ENCODE measurements at regions of chr7 and their contacts with region 1.

Region 1: GRCh38 chr7:99438573-99439480 is at the starts of genes CPSF4 and PTCD1:
- DNase-seq: peak; percentile 84 to 96
- H3K4me3 ChIP-seq: peak within 1 kb of the TSS; percentile 87 to 95 (median 88)
- H3K27ac ChIP-seq: peak within 1 kb of the TSS; percentile 93
- H3K4me1 ChIP-seq: peaks cover 0 to 12% (median 6%) of the 10 kb centered on the region in 4 experiments; a peak in 5 of 7 replicates
- H3K27me3 ChIP-seq: no peaks in the 10 kb centered on the region
- CTCF ChIP-seq: no peak
- EP300 ChIP-seq: peak in 1 of 2 experiments; percentile 49; a peak in 1 of 3 replicates
- POLR2A ChIP-seq: peak in 1 of 2 experiments; percentile 83; a peak in 2 of 3 replicates
- RAD21 ChIP-seq: no peak
- total RNA-seq, gene CPSF4: 74.8 and 77.5 TPM in 2 replicates
- total RNA-seq, gene PTCD1: 7.5 and 8.5 TPM in 2 replicates

Region 2: GRCh38 chr7:99422186-99422585 is 16.6 kb before region 1 on chr7:
- CTCF ChIA-PET with region 1: no interaction called
- POLR2A ChIA-PET with region 1: interaction called, 19 read pairs
- DNase-seq: no peak
- H3K4me3 ChIP-seq: no peak overlapping the region
- H3K27ac ChIP-seq: no peak overlapping the region
- H3K4me1 ChIP-seq: no peaks in the 10 kb centered on the region; a peak in 1 of 7 replicates
- H3K27me3 ChIP-seq: no peaks in the 10 kb centered on the region; a peak in 1 of 7 replicates
- CTCF ChIP-seq: no peak
- EP300 ChIP-seq: no peak
- POLR2A ChIP-seq: no peak
- RAD21 ChIP-seq: no peak

Region 3: DNA sequence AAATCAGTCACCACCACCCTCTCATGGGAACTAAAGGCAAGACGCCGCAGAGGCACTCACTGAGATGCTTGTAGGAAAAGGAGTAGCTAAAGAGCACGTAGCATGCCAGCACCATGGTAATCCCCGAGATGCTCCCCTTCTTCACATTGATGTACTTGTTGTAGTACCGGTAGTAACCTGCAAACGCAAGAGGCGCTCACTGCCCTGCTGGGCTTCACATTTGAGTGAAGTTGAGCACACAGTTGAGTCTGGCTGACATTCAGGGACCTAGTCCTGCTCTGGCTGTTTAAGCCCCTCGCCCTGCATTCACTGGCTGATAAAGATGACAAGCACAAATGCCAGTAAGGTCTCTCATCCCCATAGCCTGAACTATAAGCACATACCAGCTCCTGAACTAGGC is 20.3 kb after region 1 on chr7:
- CTCF ChIA-PET with region 1: interaction called, 7 read pairs
- POLR2A ChIA-PET with region 1: interaction called, 59 read pairs
- DNase-seq: no peak
- H3K4me3 ChIP-seq: no peak overlapping the region
- H3K27ac ChIP-seq: no peak overlapping the region
- H3K4me1 ChIP-seq: no peaks in the 10 kb centered on the region; a peak in 1 of 7 replicates
- H3K27me3 ChIP-seq: no peaks in the 10 kb centered on the region
- CTCF ChIP-seq: peak; percentile 52 to 82 (median 61)
- EP300 ChIP-seq: no peak
- POLR2A ChIP-seq: peak; percentile 41 to 44; a peak in 1 of 3 replicates
- RAD21 ChIP-seq: peak; percentile 40 to 56; a peak in 3 of 4 replicates

Region 4: GRCh38 chr7:99465421-99465768 is 26.6 kb after region 1 on chr7:
- CTCF ChIA-PET with region 1: no interaction called
- POLR2A ChIA-PET with region 1: interaction called, 59 read pairs
- DNase-seq: no peak
- H3K4me3 ChIP-seq: peak overlapping the region; percentile 92 to 99 (median 97)
- H3K27ac ChIP-seq: peak overlapping the region; percentile 98
- H3K4me1 ChIP-seq: peaks cover 0 to 2% (median 0%) of the 10 kb centered on the region in 4 experiments; a peak in 1 of 7 replicates
- H3K27me3 ChIP-seq: no peaks in the 10 kb centered on the region
- CTCF ChIP-seq: no peak
- EP300 ChIP-seq: no peak
- POLR2A ChIP-seq: no peak
- RAD21 ChIP-seq: no peak